ENCODE measurements at regions of chr12 and their contacts with region 1.

Region 1: DNA sequence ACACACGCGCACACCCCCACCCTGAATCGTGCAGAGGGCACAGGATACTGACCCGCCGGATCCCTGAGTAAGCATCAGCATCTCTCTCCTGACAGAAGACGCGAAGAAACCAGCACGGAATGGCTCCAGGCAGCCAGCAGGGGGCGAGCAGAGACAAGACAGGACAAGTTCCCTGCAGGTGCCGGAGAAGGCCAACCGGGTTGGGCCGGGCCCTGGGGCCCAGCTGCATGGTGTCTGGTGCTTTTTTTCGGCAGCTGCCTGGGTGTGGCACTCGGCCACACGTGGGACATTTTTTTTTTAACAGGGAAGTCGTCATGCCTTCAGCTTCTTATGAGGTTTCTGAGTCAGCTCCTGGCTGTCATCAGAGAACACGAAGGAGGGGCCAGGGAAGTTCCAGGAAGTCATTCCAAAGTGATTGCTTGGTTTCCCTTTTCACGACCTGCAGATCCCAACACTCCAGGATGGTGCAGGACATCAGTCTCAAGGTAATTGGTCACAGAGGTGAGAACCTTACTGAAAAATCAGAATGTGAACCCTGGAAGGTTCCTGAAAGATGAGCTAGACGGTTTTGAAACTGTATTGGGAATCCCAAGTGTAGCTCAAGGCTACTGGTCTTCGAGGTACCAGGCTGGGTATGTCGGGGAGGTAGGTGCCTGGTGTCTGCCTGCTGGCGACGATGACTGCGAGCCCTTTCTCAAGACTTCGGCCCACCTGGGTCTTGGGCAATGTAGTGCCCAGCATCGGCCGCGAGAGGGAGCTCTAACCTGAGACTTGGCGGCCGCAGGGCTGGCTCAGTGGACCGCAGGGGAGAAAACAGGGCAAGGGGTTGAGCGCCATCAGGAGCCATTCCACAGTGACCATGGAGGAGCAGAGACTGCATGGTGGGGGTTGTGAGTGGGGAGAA is 190.8 kb upstream of the PRMT8 start:
- DNase-seq: peak; percentile 84
- H3K4me3 Mint-ChIP-seq: peak overlapping the region; percentile 26
- H3K27ac Mint-ChIP-seq: peak overlapping the region; percentile 52
- H3K4me1 Mint-ChIP-seq: peaks cover 10% of the 10 kb centered on the region
- H3K27me3 Mint-ChIP-seq: peaks cover 3% of the 10 kb centered on the region

Region 2: GRCh38 chr12:3275171-3276041 is 24.8 kb before region 1 on chr12:
- CTCF ChIA-PET with region 1: interaction called, 25 read pairs
- POLR2A ChIA-PET with region 1: no interaction called
- DNase-seq: peak; percentile 71
- H3K4me3 Mint-ChIP-seq: no peak overlapping the region
- H3K27ac Mint-ChIP-seq: no peak overlapping the region
- H3K4me1 Mint-ChIP-seq: no peaks in the 10 kb centered on the region
- H3K27me3 Mint-ChIP-seq: peaks cover 1% of the 10 kb centered on the region

Region 3: DNA sequence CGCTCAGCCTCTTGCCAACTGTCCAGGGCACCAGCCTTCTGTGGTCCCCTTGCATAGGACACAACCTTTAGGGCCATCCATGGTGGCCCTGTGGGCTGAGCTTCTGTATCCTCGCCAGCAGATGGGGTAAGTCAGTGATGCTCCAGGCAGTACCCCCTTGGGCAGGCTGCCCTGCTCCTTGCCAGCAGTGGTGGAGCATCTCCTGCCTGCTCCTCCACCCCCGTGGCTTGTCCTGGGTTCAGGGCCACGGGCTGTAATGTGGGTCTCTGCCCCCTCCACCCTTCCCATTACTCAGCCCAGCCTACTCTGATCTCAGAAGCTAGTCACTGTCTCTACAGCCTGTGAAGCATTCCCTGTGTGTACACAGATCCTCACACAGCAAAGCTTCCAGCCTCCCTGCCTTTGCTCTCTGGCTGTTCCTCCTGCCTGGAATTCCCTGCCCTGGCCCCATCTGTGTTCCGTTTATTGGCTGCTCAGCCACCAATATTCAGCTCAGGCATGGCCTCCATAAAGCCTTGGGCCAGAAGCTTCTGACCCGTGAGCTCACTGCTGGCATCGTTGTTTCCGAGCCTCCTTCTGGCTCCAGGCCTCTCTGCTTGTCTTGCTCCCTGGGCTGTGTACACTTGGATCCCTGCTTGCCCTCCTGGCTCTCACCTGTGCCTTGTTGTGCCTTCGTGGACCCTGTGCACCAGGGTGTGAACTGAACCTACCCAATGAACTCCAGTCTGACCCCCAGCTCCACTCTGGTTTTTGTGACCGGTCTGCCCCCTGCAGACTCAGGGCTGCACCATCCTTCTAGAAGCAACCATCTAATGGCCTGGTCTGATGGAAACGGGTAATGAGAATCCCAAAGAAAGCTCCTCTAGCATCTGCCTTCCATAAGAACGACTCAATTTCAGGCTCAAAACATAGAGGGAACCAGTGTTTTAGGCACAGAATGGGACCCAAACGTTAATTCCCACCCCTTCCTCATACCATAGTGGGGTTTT is 13.8 kb after region 1 on chr12:
- CTCF ChIA-PET with region 1: interaction called, 50 read pairs
- POLR2A ChIA-PET with region 1: no interaction called
- DNase-seq: no peak
- H3K4me3 Mint-ChIP-seq: no peak overlapping the region
- H3K27ac Mint-ChIP-seq: no peak overlapping the region
- H3K4me1 Mint-ChIP-seq: no peaks in the 10 kb centered on the region
- H3K27me3 Mint-ChIP-seq: peaks cover 11% of the 10 kb centered on the region

Region 4: GRCh38 chr12:3641428-3642018 is 341.3 kb after region 1 on chr12:
- CTCF ChIA-PET with region 1: no interaction called
- POLR2A ChIA-PET with region 1: no interaction called
- DNase-seq: no peak
- H3K4me3 Mint-ChIP-seq: no peak overlapping the region
- H3K27ac Mint-ChIP-seq: no peak overlapping the region
- H3K4me1 Mint-ChIP-seq: peaks cover 2% of the 10 kb centered on the region
- H3K27me3 Mint-ChIP-seq: no peaks in the 10 kb centered on the region

Region 5: DNA sequence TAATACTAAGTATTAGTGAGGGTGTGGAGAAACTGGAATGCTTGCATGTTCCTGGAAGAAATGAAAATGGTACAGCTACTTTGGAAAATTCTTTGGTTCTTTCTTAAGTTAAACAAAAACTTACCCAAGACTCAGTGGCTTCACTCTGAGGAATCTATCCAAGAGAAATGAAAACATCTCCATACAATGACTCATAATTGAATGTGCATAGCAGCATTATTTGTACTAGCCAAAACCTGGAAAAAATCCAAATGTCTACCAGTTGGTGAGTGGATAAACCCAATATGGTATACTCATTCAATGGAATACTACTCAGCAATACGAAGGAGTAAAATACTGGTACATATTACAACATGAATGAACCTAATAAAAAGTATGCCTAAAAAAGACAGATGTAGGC is 470.7 kb after region 1 on chr12:
- CTCF ChIA-PET with region 1: interaction called, 18 read pairs
- POLR2A ChIA-PET with region 1: no interaction called
- DNase-seq: no peak
- H3K4me3 Mint-ChIP-seq: no peak overlapping the region
- H3K27ac Mint-ChIP-seq: no peak overlapping the region
- H3K4me1 Mint-ChIP-seq: peaks cover 12% of the 10 kb centered on the region
- H3K27me3 Mint-ChIP-seq: no peaks in the 10 kb centered on the region

Region 6: GRCh38 chr12:3803865-3804472 is 503.8 kb after region 1 on chr12:
- CTCF ChIA-PET with region 1: interaction called, 80 read pairs
- POLR2A ChIA-PET with region 1: no interaction called
- DNase-seq: peak; percentile 77
- H3K4me3 Mint-ChIP-seq: no peak overlapping the region
- H3K27ac Mint-ChIP-seq: no peak overlapping the region
- H3K4me1 Mint-ChIP-seq: peaks cover 4% of the 10 kb centered on the region
- H3K27me3 Mint-ChIP-seq: no peaks in the 10 kb centered on the region

Measured in activated CD4-positive, alpha-beta memory T cell treated with anti-CD3 and anti-CD28 coated beads, Interleukin-2, amount 10 ng/mL, durations not matched to agents 7 days and 5 days (primary cell).